WTC11 (cell line): ENCODE measurements at regions of chr20 and their contacts with region 1.

Region 1: GRCh38 chr20:62376112-62377063 is 9.3 kb upstream of the LAMA5 start:
- DNase-seq: peak; percentile 82
- ATAC-seq: peak; percentile 82
- H3K4me3 Mint-ChIP-seq: no peak overlapping the region
- H3K27ac Mint-ChIP-seq: peak overlapping the region; percentile 94
- H3K4me1 Mint-ChIP-seq: peaks cover 31% of the 10 kb centered on the region
- H3K27me3 Mint-ChIP-seq: no peaks in the 10 kb centered on the region; the same call in 1 of the 2 replicates
- CTCF ChIP-seq: no peak

Region 2: GRCh38 chr20:62302341-62303058 is 73.9 kb before region 1 on chr20 and contains the start of gene ADRM1:
- CTCF ChIA-PET with region 1: interaction called, 12 read pairs
- POLR2A ChIA-PET with region 1: interaction called, 6 read pairs
- DNase-seq: peak; percentile 98
- ATAC-seq: peak; percentile 80
- H3K4me3 Mint-ChIP-seq: peak within 1 kb of the TSS; percentile 86
- H3K27ac Mint-ChIP-seq: peak within 1 kb of the TSS; percentile 96
- H3K4me1 Mint-ChIP-seq: peaks cover 18% of the 10 kb centered on the region
- H3K27me3 Mint-ChIP-seq: no peaks in the 10 kb centered on the region
- CTCF ChIP-seq: peak; percentile 73
- total RNA-seq, gene ADRM1: 146 to 160 TPM (median 147 TPM) in 3 replicates

Region 3: GRCh38 chr20:62516345-62516744 is 140.0 kb after region 1 on chr20:
- CTCF ChIA-PET with region 1: no interaction called
- POLR2A ChIA-PET with region 1: no interaction called
- DNase-seq: peak; percentile 41
- ATAC-seq: peak; percentile 60; the same call in 1 of the 2 replicates
- H3K4me3 Mint-ChIP-seq: no peak overlapping the region
- H3K27ac Mint-ChIP-seq: no peak overlapping the region
- H3K4me1 Mint-ChIP-seq: no peaks in the 10 kb centered on the region; the same call in 1 of the 2 replicates
- H3K27me3 Mint-ChIP-seq: no peaks in the 10 kb centered on the region
- CTCF ChIP-seq: no peak